MCF 10A (cell line): ENCODE measurements at regions of chr11 and their contacts with region 1.

Region 1: DNA sequence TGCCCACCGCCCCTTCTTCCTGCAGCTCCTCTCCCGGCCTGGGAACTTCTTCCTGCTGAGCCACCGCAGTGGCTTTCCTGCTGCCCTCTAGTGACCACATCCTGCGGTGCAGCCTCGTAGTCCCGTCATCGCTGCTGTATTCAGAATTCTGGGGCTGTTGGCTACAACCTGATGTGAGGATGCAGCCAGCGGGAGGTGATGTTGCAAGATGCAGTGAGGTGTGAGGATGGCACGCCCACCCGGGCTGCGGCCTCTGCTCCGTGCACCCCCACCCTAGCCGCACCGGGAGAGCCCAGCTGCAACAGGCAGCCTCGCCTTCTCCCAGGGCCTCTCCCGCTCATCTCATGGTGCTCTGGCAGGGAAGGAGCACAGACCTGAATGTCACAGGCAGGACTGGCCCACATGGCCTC is 10.1 kb downstream of the CHST1 start:
- DNase-seq: peak; percentile 63
- H3K4me3 Mint-ChIP-seq: no peak overlapping the region
- H3K27ac Mint-ChIP-seq: no peak overlapping the region
- H3K4me1 Mint-ChIP-seq: no peaks in the 10 kb centered on the region
- H3K27me3 Mint-ChIP-seq: peaks cover 1% of the 10 kb centered on the region
- CTCF ChIP-seq: peak; percentile 89

Region 2: DNA sequence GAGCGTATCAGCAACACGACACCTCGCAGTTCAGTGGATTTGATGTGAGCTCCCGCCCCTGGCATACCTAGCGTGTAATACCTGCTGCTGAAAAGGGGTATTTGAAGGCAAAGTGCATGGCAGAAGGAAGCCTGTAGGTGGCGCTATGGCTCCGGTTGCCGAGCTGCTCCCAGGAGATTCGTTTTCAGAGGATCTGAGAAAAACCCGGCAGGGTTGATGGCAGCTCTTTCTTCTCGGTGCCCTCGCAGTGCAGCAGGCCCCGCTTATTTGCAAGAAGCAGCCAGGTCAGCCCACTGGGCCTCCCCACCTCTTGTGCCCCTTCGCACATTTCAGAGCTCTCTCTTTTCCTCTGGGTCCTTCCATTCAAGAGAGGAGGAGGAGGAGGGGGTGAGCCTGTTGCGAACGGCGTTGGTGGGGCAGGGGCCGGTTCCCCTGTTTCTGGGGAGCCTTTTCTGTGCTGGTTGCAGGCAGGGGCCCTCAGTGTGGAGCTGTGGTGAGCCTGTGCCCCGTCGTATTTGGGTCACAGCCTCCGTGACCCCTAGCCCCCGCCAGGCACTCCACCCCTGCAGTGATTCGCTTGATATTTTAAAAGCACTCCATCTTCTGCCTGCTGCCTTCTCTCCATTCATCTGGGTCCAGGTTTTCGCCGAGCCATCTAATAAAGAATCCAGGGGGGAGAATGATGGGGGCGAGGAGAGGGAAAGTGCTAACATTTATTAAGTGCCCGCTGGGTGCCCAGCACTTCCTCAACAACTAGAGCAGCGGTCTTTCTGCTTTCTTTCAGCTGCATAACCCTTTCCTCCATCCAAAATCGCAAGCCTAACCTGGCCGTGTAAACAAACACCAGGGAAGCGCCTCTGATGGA is 283.9 kb before region 1 on chr11:
- CTCF ChIA-PET with region 1: interaction called, 57 read pairs
- POLR2A ChIA-PET with region 1: interaction called, 3 read pairs
- intact Hi-C with region 1: no loop called
- DNase-seq: peak; percentile 66
- H3K4me3 Mint-ChIP-seq: no peak overlapping the region
- H3K27ac Mint-ChIP-seq: no peak overlapping the region
- H3K4me1 Mint-ChIP-seq: no peaks in the 10 kb centered on the region
- H3K27me3 Mint-ChIP-seq: peaks cover 35% of the 10 kb centered on the region
- CTCF ChIP-seq: peak; percentile 94

Region 3: GRCh38 chr11:45405916-45406670 is 249.3 kb before region 1 on chr11:
- CTCF ChIA-PET with region 1: interaction called, 42 read pairs
- POLR2A ChIA-PET with region 1: no interaction called
- intact Hi-C with region 1: loop called (anchors 1 kb)
- DNase-seq: peak; percentile 27
- H3K4me3 Mint-ChIP-seq: no peak overlapping the region
- H3K27ac Mint-ChIP-seq: no peak overlapping the region
- H3K4me1 Mint-ChIP-seq: no peaks in the 10 kb centered on the region
- H3K27me3 Mint-ChIP-seq: peaks cover 52% of the 10 kb centered on the region
- CTCF ChIP-seq: peak; percentile 53

Region 4: DNA sequence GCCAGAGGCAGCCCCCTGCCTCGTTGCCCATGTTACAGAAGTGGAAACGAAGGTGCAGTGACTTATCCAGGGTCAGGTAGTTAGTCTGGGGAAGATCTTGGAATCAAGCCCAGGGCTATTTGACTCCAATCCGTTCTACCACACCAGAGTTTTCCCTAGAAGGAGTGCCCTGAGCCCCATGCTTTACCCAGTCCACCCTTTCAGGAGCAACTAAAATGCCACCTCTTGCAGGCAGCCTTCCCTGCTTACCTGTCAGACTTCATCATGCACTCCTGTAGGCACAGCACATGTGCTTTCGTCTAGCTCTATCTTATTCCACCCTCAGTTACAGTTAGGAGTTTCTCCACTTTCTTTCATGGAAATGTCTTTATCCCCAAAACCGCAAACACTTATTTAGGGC is 70.1 kb before region 1 on chr11:
- CTCF ChIA-PET with region 1: no interaction called
- POLR2A ChIA-PET with region 1: no interaction called
- intact Hi-C with region 1: no loop called
- DNase-seq: no peak
- H3K4me3 Mint-ChIP-seq: no peak overlapping the region
- H3K27ac Mint-ChIP-seq: no peak overlapping the region
- H3K4me1 Mint-ChIP-seq: no peaks in the 10 kb centered on the region
- H3K27me3 Mint-ChIP-seq: peaks cover 58% of the 10 kb centered on the region
- CTCF ChIP-seq: no peak

Region 5: DNA sequence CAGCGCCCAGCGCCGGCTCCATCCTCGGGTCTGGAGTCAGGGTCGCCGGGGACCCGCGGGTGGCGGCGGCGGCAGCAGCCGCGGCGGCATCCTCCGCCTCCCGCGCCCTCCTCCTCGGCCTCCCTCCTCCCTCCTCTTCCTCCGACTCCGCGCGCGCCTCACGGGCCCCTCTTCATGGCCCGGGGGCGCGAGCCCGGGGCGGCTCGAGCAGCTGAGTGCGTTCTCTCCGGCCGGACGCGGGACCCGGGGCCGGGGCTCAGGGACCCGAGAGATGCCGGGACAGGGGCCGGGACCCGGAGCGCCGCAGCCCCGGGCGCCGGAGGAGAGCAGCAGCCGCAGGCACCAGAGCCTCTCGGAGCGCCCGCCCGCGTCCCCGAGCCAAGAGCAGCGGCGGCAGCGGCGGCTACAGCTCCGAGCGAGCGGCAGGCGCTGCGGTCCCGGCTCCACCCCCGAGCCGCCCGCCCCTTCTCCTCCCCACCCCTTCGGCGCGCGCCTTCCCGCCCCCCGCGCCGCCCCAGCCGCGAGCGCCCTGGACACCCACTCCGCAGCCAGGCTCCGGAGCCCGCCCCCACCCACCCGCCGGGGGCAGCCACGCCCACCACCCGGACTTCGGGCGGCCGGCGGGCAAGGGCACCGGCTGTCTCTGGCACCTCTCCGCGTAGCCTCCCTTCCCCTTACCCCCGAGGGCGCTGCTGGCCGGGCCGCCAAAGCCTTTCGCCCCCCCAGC is 10.0 kb after region 1 on chr11 and contains the start of gene CHST1:
- CTCF ChIA-PET with region 1: interaction called, 24 read pairs
- POLR2A ChIA-PET with region 1: no interaction called
- intact Hi-C with region 1: no loop called
- DNase-seq: no peak
- H3K4me3 Mint-ChIP-seq: peak within 1 kb of the TSS; percentile 50
- H3K27ac Mint-ChIP-seq: no peak within 1 kb of the TSS
- H3K4me1 Mint-ChIP-seq: no peaks in the 10 kb centered on the region
- H3K27me3 Mint-ChIP-seq: peaks cover 55% of the 10 kb centered on the region
- CTCF ChIP-seq: no peak
- total RNA-seq, gene CHST1: not detected in 2 replicates